BJ (cell line): ENCODE measurements at regions of chr6 and their contacts with region 1.

Region 1: DNA sequence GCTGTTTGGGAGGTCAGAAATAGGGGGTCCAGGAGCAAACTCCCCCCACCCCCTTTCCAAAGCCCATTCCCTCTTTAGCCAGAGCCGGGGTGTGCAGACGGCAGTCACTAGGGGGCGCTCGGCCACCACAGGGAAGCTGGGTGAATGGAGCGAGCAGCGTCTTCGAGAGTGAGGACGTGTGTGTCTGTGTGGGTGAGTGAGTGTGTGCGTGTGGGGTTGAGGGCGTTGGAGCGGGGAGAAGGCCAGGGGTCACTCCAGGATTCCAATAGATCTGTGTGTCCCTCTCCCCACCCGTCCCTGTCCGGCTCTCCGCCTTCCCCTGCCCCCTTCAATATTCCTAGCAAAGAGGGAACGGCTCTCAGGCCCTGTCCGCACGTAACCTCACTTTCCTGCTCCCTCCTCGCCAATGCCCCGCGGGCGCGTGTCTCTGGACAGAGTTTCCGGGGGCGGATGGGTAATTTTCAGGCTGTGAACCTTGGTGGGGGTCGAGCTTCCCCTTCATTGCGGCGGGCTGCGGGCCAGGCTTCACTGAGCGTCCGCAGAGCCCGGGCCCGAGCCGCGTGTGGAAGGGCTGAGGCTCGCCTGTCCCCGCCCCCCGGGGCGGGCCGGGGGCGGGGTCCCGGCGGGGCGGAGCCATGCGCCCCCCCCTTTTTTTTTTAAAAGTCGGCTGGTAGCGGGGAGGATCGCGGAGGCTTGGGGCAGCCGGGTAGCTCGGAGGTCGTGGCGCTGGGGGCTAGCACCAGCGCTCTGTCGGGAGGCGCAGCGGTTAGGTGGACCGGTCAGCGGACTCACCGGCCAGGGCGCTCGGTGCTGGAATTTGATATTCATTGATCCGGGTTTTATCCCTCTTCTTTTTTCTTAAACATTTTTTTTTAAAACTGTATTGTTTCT is at the start of gene VEGFA:
- DNase-seq: no peak
- H3K4me3 ChIP-seq: peak within 1 kb of the TSS; percentile 94
- H3K27me3 ChIP-seq: peaks cover 3% of the 10 kb centered on the region; the same call in 1 of the 2 replicates
- CTCF ChIP-seq: peak; percentile 100
- polyA plus RNA-seq, gene VEGFA: 197 and 357 TPM in 2 replicates

Region 2: GRCh38 chr6:43714311-43715055 is 55.3 kb before region 1 on chr6:
- CTCF ChIA-PET with region 1: interaction called, 13 read pairs
- POLR2A ChIA-PET with region 1: no interaction called
- DNase-seq: no peak
- H3K4me3 ChIP-seq: no peak overlapping the region
- H3K27me3 ChIP-seq: peaks cover 8% of the 10 kb centered on the region; the same call in 1 of the 2 replicates
- CTCF ChIP-seq: no peak

Region 3: GRCh38 chr6:43951063-43951755 is 181.4 kb after region 1 on chr6:
- CTCF ChIA-PET with region 1: interaction called, 58 read pairs
- POLR2A ChIA-PET with region 1: interaction called, 3 read pairs
- DNase-seq: no peak
- H3K4me3 ChIP-seq: no peak overlapping the region
- H3K27me3 ChIP-seq: no peaks in the 10 kb centered on the region; the same call in 1 of the 2 replicates
- CTCF ChIP-seq: peak; percentile 64

Region 4: GRCh38 chr6:44010411-44011349 is 240.9 kb after region 1 on chr6:
- CTCF ChIA-PET with region 1: interaction called, 21 read pairs
- POLR2A ChIA-PET with region 1: interaction called, 9 read pairs
- DNase-seq: peak; percentile 78
- H3K4me3 ChIP-seq: no peak overlapping the region
- H3K27me3 ChIP-seq: no peaks in the 10 kb centered on the region
- CTCF ChIP-seq: no peak